CD4-positive, alpha-beta memory T cell (primary cell): ENCODE measurements at regions of chr17 and their contacts with region 1.

Region 1: GRCh38 chr17:35808962-35809854 is at the start of gene TAF15:
- DNase-seq: peak; percentile 96 to 99 (median 97)
- H3K4me3 ChIP-seq: peak within 1 kb of the TSS; percentile 67 to 96
- H3K4me3 Mint-ChIP-seq: peak within 1 kb of the TSS; percentile 95 to 98 (median 97)
- H3K27ac ChIP-seq: peak within 1 kb of the TSS; percentile 85
- H3K27ac Mint-ChIP-seq: peak within 1 kb of the TSS; percentile 93 to 99 (median 98)
- H3K4me1 ChIP-seq: peaks cover 51% of the 10 kb centered on the region
- H3K4me1 Mint-ChIP-seq: peaks cover 32 to 66% (median 48%) of the 10 kb centered on the region in 4 donors
- H3K27me3 ChIP-seq: no peaks in the 10 kb centered on the region
- H3K27me3 Mint-ChIP-seq: no peaks in the 10 kb centered on the region
- total RNA-seq, gene TAF15: 232 to 242 TPM

Region 2: GRCh38 chr17:34961093-34961911 is 847.9 kb before region 1 on chr17 and contains the starts of genes CCT6B and ZNF830:
- CTCF ChIA-PET with region 1: no interaction called
- POLR2A ChIA-PET with region 1: no interaction called
- intact Hi-C with region 1: loop called (anchors 1 kb)
- DNase-seq: peak; percentile 90 to 95 (median 92)
- H3K4me3 ChIP-seq: peak within 1 kb of the TSS; percentile 82 to 84
- H3K4me3 Mint-ChIP-seq: peak within 1 kb of the TSS; percentile 100
- H3K27ac ChIP-seq: peak within 1 kb of the TSS; percentile 86
- H3K27ac Mint-ChIP-seq: peak within 1 kb of the TSS; percentile 97 to 100 (median 100)
- H3K4me1 ChIP-seq: peaks cover 20% of the 10 kb centered on the region
- H3K4me1 Mint-ChIP-seq: peaks cover 17 to 38% (median 27%) of the 10 kb centered on the region in 4 donors
- H3K27me3 ChIP-seq: no peaks in the 10 kb centered on the region
- H3K27me3 Mint-ChIP-seq: peaks cover 0 to 4% of the 10 kb centered on the region in 2 donors
- total RNA-seq, gene CCT6B: 2.0 to 2.1 TPM
- total RNA-seq, gene ZNF830: 41.0 to 44.0 TPM

Region 3: GRCh38 chr17:35566968-35567367 is 242.2 kb before region 1 on chr17:
- CTCF ChIA-PET with region 1: no interaction called
- POLR2A ChIA-PET with region 1: no interaction called
- intact Hi-C with region 1: no loop called
- DNase-seq: no peak
- H3K4me3 ChIP-seq: no peak overlapping the region
- H3K4me3 Mint-ChIP-seq: peak overlapping the region; percentile 74 to 98 (median 83)
- H3K27ac ChIP-seq: no peak overlapping the region
- H3K27ac Mint-ChIP-seq: peak overlapping the region; percentile 18 to 86 (median 84)
- H3K4me1 ChIP-seq: peaks cover 24% of the 10 kb centered on the region
- H3K4me1 Mint-ChIP-seq: peaks cover 18 to 42% (median 28%) of the 10 kb centered on the region in 4 donors
- H3K27me3 ChIP-seq: no peaks in the 10 kb centered on the region
- H3K27me3 Mint-ChIP-seq: peaks cover 0 to 2% of the 10 kb centered on the region in 2 donors

Region 4: DNA sequence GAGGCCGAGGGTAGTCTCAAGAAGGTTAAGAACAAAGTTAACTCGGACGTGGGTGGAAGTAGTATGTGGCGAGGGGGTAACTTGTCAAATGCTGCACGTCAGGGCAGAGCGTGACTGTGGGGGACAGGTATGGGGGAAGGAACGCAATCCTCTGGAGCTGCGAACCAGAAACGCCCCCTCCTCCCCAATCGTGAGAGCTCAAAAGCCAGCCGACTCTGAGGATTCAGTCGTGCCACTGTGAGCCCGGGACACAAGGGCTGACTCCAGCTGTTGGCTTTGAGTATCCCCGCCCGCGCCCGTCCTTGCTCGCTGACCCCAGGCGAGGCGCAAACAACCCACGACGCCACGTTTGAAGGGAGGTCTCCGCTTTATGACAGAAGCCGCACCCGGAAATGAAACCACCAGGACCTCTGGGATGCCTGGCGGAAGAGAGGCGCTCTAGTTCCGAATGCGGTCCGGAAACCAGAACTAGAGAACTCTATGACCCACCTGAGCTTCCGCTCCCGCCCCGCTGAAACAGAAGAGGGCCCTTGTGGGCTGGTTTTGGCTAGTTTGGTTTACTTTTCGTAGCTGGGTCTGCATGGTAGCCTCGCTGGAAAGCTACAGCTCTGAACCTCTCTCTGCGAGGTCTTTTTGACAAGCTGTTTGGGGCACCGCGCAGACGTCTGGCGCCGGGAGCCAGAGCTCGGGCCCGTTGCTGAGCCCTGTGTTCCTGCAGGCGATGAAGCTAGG is 230.8 kb before region 1 on chr17 and contains the start of gene PEX12:
- CTCF ChIA-PET with region 1: interaction called, 4 read pairs
- POLR2A ChIA-PET with region 1: interaction called, 18 read pairs
- intact Hi-C with region 1: no loop called
- DNase-seq: peak; percentile 87 to 95 (median 91)
- H3K4me3 ChIP-seq: peak within 1 kb of the TSS; percentile 81 to 90
- H3K4me3 Mint-ChIP-seq: peak within 1 kb of the TSS; percentile 95 to 99 (median 97)
- H3K27ac ChIP-seq: peak within 1 kb of the TSS; percentile 89
- H3K27ac Mint-ChIP-seq: peak within 1 kb of the TSS; percentile 97 to 100 (median 99)
- H3K4me1 ChIP-seq: peaks cover 24% of the 10 kb centered on the region
- H3K4me1 Mint-ChIP-seq: peaks cover 6 to 34% (median 26%) of the 10 kb centered on the region in 4 donors
- H3K27me3 ChIP-seq: no peaks in the 10 kb centered on the region
- H3K27me3 Mint-ChIP-seq: no peaks in the 10 kb centered on the region
- total RNA-seq, gene PEX12: 8.2 to 8.5 TPM

Region 5: DNA sequence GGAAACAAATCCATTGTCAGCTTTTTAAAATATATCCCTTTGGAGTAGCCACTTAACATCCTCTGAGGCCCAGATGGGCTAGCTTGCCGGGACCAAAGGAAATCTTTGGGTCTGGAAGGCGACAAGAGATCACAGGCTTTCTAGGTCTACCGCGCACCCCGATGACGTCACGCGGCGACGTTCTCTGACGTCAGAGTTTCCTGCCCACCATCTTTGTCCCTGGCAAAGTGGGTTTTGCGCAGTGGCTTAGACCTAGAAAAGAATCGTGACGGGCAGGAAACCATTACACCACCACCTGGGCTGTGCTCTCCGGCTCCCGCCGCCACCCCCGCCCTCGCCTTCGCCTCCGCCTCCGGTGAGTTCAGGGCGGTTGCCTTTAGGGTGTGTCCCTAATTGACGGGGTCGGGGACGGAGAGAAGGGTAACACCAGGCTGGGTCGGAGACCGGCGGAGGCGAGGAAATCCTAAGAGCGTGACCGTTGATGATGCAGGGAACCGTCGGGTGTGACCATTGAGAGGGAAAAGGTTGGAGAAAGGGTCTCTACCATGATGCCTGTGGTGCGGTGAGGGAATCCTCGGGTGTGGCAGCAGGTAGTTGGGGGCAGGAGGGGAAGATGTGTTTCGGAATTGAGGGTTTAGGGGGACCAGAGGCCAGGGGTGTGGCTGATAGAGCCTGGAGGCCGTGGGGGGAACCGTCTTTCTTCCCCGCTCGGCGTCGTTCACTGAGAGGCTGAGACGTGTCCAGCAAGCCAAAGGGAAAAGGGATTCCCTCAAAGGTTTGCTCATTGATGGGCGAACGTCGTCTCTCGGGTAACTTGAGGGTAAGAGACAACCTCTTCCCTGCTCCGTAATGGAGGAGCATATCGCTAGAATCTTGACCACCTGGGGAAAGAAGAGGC is 221.9 kb before region 1 on chr17 and contains the start of gene AP2B1:
- CTCF ChIA-PET with region 1: no interaction called
- POLR2A ChIA-PET with region 1: interaction called, 4 read pairs
- intact Hi-C with region 1: loop called (anchors 5 kb)
- DNase-seq: peak; percentile 97 to 99 (median 98)
- H3K4me3 ChIP-seq: peak within 1 kb of the TSS; percentile 81 to 97
- H3K4me3 Mint-ChIP-seq: peak within 1 kb of the TSS; percentile 94 to 100 (median 100)
- H3K27ac ChIP-seq: peak within 1 kb of the TSS; percentile 94
- H3K27ac Mint-ChIP-seq: peak within 1 kb of the TSS; percentile 94 to 100 (median 99)
- H3K4me1 ChIP-seq: peaks cover 41% of the 10 kb centered on the region
- H3K4me1 Mint-ChIP-seq: peaks cover 25 to 41% (median 34%) of the 10 kb centered on the region in 4 donors
- H3K27me3 ChIP-seq: no peaks in the 10 kb centered on the region
- H3K27me3 Mint-ChIP-seq: peaks cover 0 to 3% of the 10 kb centered on the region in 2 donors
- total RNA-seq, gene AP2B1: 160 to 165 TPM

Region 6: GRCh38 chr17:35794988-35795824 is 14.0 kb before region 1 on chr17 and contains the start of gene MMP28:
- CTCF ChIA-PET with region 1: interaction called, 11 read pairs
- POLR2A ChIA-PET with region 1: interaction called, 30 read pairs
- intact Hi-C with region 1: no loop called
- DNase-seq: peak in 4 of 5 donors; percentile 18 to 33 (median 28)
- H3K4me3 ChIP-seq: peak within 1 kb of the TSS in 1 of 2 donors; percentile 54
- H3K4me3 Mint-ChIP-seq: peak within 1 kb of the TSS; percentile 72 to 85 (median 76)
- H3K27ac ChIP-seq: no peak within 1 kb of the TSS
- H3K27ac Mint-ChIP-seq: no peak within 1 kb of the TSS
- H3K4me1 ChIP-seq: peaks cover 12% of the 10 kb centered on the region
- H3K4me1 Mint-ChIP-seq: peaks cover 0 to 14% (median 7%) of the 10 kb centered on the region in 4 donors
- H3K27me3 ChIP-seq: peaks cover 12% of the 10 kb centered on the region
- H3K27me3 Mint-ChIP-seq: peaks cover 21 to 36% of the 10 kb centered on the region in 2 donors
- total RNA-seq, gene MMP28: 0.64 to 0.96 TPM

Region 7: GRCh38 chr17:35819456-35819855 is 10.2 kb after region 1 on chr17:
- CTCF ChIA-PET with region 1: interaction called, 22 read pairs
- POLR2A ChIA-PET with region 1: interaction called, 28 read pairs
- intact Hi-C with region 1: no loop called
- DNase-seq: no peak
- H3K4me3 ChIP-seq: no peak overlapping the region
- H3K4me3 Mint-ChIP-seq: no peak overlapping the region
- H3K27ac ChIP-seq: no peak overlapping the region
- H3K27ac Mint-ChIP-seq: peak overlapping the region in 1 of 7 donors; percentile 61
- H3K4me1 ChIP-seq: peaks cover 37% of the 10 kb centered on the region
- H3K4me1 Mint-ChIP-seq: peaks cover 24 to 50% (median 41%) of the 10 kb centered on the region in 4 donors
- H3K27me3 ChIP-seq: no peaks in the 10 kb centered on the region
- H3K27me3 Mint-ChIP-seq: no peaks in the 10 kb centered on the region

Region 8: DNA sequence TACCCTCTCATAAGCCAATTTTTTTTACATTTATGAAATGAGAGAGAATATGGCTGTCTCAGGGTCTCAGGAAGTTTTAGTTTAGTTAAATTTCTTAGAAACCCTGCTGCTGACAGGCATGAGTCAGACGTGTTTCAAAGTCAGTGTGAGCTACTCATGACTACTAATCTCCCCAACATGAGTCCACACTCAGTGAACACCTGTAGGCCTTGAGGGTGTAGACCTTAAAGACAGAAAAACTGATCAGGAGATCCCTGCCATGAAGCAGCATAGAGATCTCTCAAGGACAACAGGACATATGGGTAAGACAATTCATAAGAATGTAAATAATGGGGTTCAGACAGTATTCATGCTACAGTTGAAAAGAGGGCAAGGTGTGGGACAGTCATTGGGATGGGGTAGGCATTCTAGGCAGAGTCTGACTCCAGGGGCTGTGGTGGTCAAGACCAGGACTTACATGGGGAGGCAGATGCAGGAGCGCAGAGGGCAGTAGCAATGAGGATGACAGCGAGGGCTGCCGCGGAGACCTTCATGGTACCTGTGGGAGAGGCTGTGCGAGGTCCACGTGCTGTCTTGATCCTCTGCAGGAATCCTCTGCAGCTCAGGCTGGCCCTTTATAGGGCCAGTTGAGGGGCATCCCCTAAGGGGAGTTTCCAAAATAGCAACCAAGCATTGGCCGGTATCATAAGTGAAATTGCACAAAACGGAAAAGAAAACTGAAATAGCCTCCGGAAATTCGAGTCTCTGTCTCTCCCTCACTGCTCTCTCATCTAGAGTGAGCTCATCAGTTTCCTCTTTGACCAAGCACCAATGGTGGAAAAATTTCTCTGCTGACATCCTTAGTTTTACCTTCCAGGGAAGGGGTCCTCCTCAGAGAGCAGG is 70.8 kb after region 1 on chr17 and contains the start of gene CCL5:
- CTCF ChIA-PET with region 1: no interaction called
- POLR2A ChIA-PET with region 1: no interaction called
- intact Hi-C with region 1: no loop called
- DNase-seq: peak; percentile 39 to 77 (median 47)
- H3K4me3 ChIP-seq: peak within 1 kb of the TSS in 1 of 2 donors; percentile 23
- H3K4me3 Mint-ChIP-seq: peak within 1 kb of the TSS; percentile 85 to 95 (median 90)
- H3K27ac ChIP-seq: peak within 1 kb of the TSS; percentile 61
- H3K27ac Mint-ChIP-seq: peak within 1 kb of the TSS; percentile 66 to 92 (median 88)
- H3K4me1 ChIP-seq: peaks cover 44% of the 10 kb centered on the region
- H3K4me1 Mint-ChIP-seq: peaks cover 15 to 57% (median 38%) of the 10 kb centered on the region in 4 donors
- H3K27me3 ChIP-seq: no peaks in the 10 kb centered on the region
- H3K27me3 Mint-ChIP-seq: no peaks in the 10 kb centered on the region
- total RNA-seq, gene CCL5: 279 to 309 TPM

Region 9: GRCh38 chr17:35889818-35890763 is 80.9 kb after region 1 on chr17:
- CTCF ChIA-PET with region 1: interaction called, 6 read pairs
- POLR2A ChIA-PET with region 1: interaction called, 10 read pairs
- intact Hi-C with region 1: no loop called
- DNase-seq: peak in 1 of 5 donors; percentile 36
- H3K4me3 ChIP-seq: no peak overlapping the region
- H3K4me3 Mint-ChIP-seq: peak overlapping the region in 4 of 8 donors; percentile 31 to 70 (median 58)
- H3K27ac ChIP-seq: peak overlapping the region; percentile 19
- H3K27ac Mint-ChIP-seq: peak overlapping the region; percentile 75 to 95 (median 87)
- H3K4me1 ChIP-seq: peaks cover 52% of the 10 kb centered on the region
- H3K4me1 Mint-ChIP-seq: peaks cover 34 to 57% (median 48%) of the 10 kb centered on the region in 4 donors
- H3K27me3 ChIP-seq: no peaks in the 10 kb centered on the region
- H3K27me3 Mint-ChIP-seq: no peaks in the 10 kb centered on the region